MCF 10A (cell line): ENCODE measurements at regions of chr2 and their contacts with region 1.

Region 1: GRCh38 chr2:66574701-66575624 is 140.0 kb downstream of the MEIS1 start:
- DNase-seq: peak; percentile 83
- H3K4me3 Mint-ChIP-seq: peak overlapping the region; percentile 78
- H3K27ac Mint-ChIP-seq: peak overlapping the region; percentile 59
- H3K4me1 Mint-ChIP-seq: peaks cover 11% of the 10 kb centered on the region
- H3K27me3 Mint-ChIP-seq: peaks cover 28% of the 10 kb centered on the region
- CTCF ChIP-seq: peak; percentile 51

Region 2: DNA sequence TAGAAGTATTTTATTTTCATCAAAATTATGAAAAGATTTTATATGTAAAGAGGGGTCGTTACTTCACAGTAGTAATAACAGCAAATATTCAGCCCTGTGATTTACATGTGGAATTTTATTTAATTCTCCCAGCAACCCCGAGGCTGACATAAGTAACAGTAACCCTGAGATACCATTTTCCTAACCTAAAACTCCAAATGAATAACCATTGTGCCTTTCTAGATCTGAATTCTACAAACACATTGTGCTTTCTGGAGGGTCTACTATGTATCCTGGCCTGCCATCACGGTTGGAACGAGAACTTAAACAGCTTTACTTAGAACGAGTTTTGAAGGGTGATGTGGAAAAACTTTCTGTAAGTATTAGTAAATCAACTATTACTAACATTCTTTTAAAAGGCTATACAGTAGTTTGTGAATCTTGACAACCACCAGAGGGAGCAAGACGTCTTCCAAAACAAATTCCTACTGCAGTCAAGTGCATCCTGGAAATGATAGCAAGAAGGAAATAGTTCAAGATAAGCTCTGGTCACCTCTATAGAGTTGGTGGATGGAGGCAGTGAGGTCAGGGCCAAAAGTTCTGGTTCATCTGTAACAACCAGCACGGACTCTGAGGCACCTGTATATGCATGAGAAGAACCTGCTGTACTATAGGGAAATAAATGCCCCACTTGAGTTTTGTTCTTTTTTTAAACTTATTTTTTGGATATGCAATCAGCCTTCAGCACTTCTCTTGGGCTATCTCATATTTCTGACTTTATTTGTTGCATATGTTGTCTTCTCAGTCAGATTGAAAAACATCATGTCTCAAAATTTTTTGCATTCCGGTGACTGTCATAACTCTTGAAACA is 1309.9 kb before region 1 on chr2:
- CTCF ChIA-PET with region 1: no interaction called
- POLR2A ChIA-PET with region 1: no interaction called
- intact Hi-C with region 1: loop called (anchors 10 kb)
- DNase-seq: peak; percentile 75
- H3K4me3 Mint-ChIP-seq: no peak overlapping the region
- H3K27ac Mint-ChIP-seq: no peak overlapping the region
- H3K4me1 Mint-ChIP-seq: peaks cover 8% of the 10 kb centered on the region
- H3K27me3 Mint-ChIP-seq: no peaks in the 10 kb centered on the region
- CTCF ChIP-seq: peak; percentile 76

Region 3: DNA sequence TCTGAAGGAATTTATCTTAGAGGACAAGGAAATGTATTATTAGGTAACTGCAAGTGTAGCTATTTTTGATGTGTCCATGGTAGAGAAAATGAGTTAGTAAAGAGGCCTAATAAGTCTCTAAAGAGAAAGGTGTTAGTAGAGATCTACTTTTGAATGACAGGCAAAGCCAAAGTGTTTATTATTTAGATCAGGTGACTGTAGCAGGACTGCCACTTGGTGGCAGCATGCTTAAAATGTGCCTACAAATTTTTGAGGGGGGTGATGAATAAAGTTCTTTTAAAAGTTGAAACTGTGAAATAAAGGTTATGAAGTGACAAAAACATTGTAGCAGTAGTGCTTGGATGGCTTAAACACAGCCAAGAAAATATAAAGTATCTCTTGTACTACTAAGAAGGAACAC is 561.5 kb before region 1 on chr2:
- CTCF ChIA-PET with region 1: interaction called, 4 read pairs
- POLR2A ChIA-PET with region 1: no interaction called
- intact Hi-C with region 1: loop called (anchors 5 kb)
- DNase-seq: peak; percentile 23
- H3K4me3 Mint-ChIP-seq: no peak overlapping the region
- H3K27ac Mint-ChIP-seq: no peak overlapping the region
- H3K4me1 Mint-ChIP-seq: peaks cover 5% of the 10 kb centered on the region
- H3K27me3 Mint-ChIP-seq: no peaks in the 10 kb centered on the region
- CTCF ChIP-seq: peak; percentile 22

Region 4: GRCh38 chr2:66839551-66840320 is 264.8 kb after region 1 on chr2:
- CTCF ChIA-PET with region 1: interaction called, 3 read pairs
- POLR2A ChIA-PET with region 1: interaction called, 10 read pairs
- intact Hi-C with region 1: no loop called
- DNase-seq: peak; percentile 79
- H3K4me3 Mint-ChIP-seq: peak overlapping the region; percentile 17
- H3K27ac Mint-ChIP-seq: peak overlapping the region; percentile 93
- H3K4me1 Mint-ChIP-seq: peaks cover 46% of the 10 kb centered on the region
- H3K27me3 Mint-ChIP-seq: no peaks in the 10 kb centered on the region
- CTCF ChIP-seq: no peak

Region 5: GRCh38 chr2:67322353-67323001 is 747.5 kb after region 1 on chr2:
- CTCF ChIA-PET with region 1: interaction called, 5 read pairs
- POLR2A ChIA-PET with region 1: no interaction called
- intact Hi-C with region 1: loop called (anchors 2 kb)
- DNase-seq: peak; percentile 76
- H3K4me3 Mint-ChIP-seq: no peak overlapping the region
- H3K27ac Mint-ChIP-seq: peak overlapping the region; percentile 57
- H3K4me1 Mint-ChIP-seq: peaks cover 6% of the 10 kb centered on the region
- H3K27me3 Mint-ChIP-seq: no peaks in the 10 kb centered on the region
- CTCF ChIP-seq: peak; percentile 44

Region 6: GRCh38 chr2:67840460-67841068 is 1265.6 kb after region 1 on chr2:
- CTCF ChIA-PET with region 1: no interaction called
- POLR2A ChIA-PET with region 1: no interaction called
- intact Hi-C with region 1: loop called (anchors 1 kb)
- DNase-seq: peak; percentile 73
- H3K4me3 Mint-ChIP-seq: no peak overlapping the region
- H3K27ac Mint-ChIP-seq: no peak overlapping the region
- H3K4me1 Mint-ChIP-seq: peaks cover 7% of the 10 kb centered on the region
- H3K27me3 Mint-ChIP-seq: no peaks in the 10 kb centered on the region
- CTCF ChIP-seq: peak; percentile 90